ENCODE measurements at regions of chr4 and their contacts with region 1.

Region 1: GRCh38 chr4:183659029-183659871 is at the starts of genes RWDD4 and TRAPPC11:
- DNase-seq: peak; percentile 98
- H3K4me3 Mint-ChIP-seq: peak within 1 kb of the TSS; percentile 85
- H3K27ac Mint-ChIP-seq: peak within 1 kb of the TSS; percentile 82
- H3K4me1 Mint-ChIP-seq: peaks cover 22% of the 10 kb centered on the region
- H3K27me3 Mint-ChIP-seq: no peaks in the 10 kb centered on the region
- CTCF ChIP-seq: peak; percentile 13
- total RNA-seq, gene RWDD4: 23.0 and 26.1 TPM in 2 replicates
- total RNA-seq, gene TRAPPC11: 29.4 and 35.0 TPM in 2 replicates

Region 2: GRCh38 chr4:183422967-183423631 is 236.2 kb before region 1 on chr4:
- CTCF ChIA-PET with region 1: no interaction called
- POLR2A ChIA-PET with region 1: no interaction called
- intact Hi-C with region 1: no loop called
- DNase-seq: peak; percentile 66
- H3K4me3 Mint-ChIP-seq: no peak overlapping the region
- H3K27ac Mint-ChIP-seq: peak overlapping the region; percentile 74
- H3K4me1 Mint-ChIP-seq: peaks cover 17% of the 10 kb centered on the region
- H3K27me3 Mint-ChIP-seq: no peaks in the 10 kb centered on the region
- CTCF ChIP-seq: no peak

Region 3: DNA sequence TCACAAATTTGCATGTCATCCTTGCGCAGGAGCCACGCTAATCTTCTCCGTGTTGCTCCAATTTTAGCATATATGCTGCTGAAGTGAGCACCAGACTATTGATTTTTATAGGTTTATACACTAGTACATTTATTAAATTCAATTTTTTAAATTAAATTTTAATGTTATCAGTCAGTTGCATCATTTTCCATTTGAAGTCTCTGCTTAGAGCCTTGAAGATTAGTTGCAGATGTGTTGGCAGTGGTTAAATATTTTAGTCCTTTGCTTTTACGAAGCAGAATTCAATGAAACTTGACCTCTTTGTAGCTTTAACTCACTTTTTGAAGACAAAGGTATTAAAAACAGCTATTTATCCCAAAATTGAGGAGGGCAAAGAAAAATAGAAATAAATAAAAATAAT is 16.4 kb after region 1 on chr4:
- CTCF ChIA-PET with region 1: interaction called, 8 read pairs
- POLR2A ChIA-PET with region 1: interaction called, 17 read pairs
- intact Hi-C with region 1: no loop called
- DNase-seq: no peak
- H3K4me3 Mint-ChIP-seq: no peak overlapping the region
- H3K27ac Mint-ChIP-seq: no peak overlapping the region
- H3K4me1 Mint-ChIP-seq: no peaks in the 10 kb centered on the region
- H3K27me3 Mint-ChIP-seq: no peaks in the 10 kb centered on the region
- CTCF ChIP-seq: no peak

Measured in MCF 10A (cell line).